Caco-2 (cell line): ENCODE measurements at regions of chr4 and their contacts with region 1.

Region 1: GRCh38 chr4:47032415-47033106 is 1.2 kb downstream of the GABRB1 start:
- DNase-seq: peak; percentile 75 to 84
- H3K4me3 ChIP-seq: peak overlapping the region; percentile 67
- H3K4me3 Mint-ChIP-seq: peak overlapping the region; percentile 97
- H3K27ac Mint-ChIP-seq: peak overlapping the region; percentile 63
- H3K4me1 ChIP-seq: no peaks in the 10 kb centered on the region; the same call in none of the 2 replicates
- H3K4me1 Mint-ChIP-seq: peaks cover 6% of the 10 kb centered on the region
- H3K27me3 ChIP-seq: no peaks in the 10 kb centered on the region
- H3K27me3 Mint-ChIP-seq: no peaks in the 10 kb centered on the region
- CTCF ChIP-seq: peak; percentile 80 to 88

Region 2: GRCh38 chr4:46648088-46648744 is 384.3 kb before region 1 on chr4:
- CTCF ChIA-PET with region 1: interaction called, 7 read pairs
- POLR2A ChIA-PET with region 1: no interaction called
- intact Hi-C with region 1: loop called (anchors 2 kb)
- DNase-seq: peak; percentile 80 to 82
- H3K4me3 ChIP-seq: no peak overlapping the region
- H3K4me3 Mint-ChIP-seq: no peak overlapping the region
- H3K27ac Mint-ChIP-seq: peak overlapping the region; percentile 71
- H3K4me1 ChIP-seq: peaks cover 7% of the 10 kb centered on the region
- H3K4me1 Mint-ChIP-seq: no peaks in the 10 kb centered on the region
- H3K27me3 ChIP-seq: no peaks in the 10 kb centered on the region
- H3K27me3 Mint-ChIP-seq: no peaks in the 10 kb centered on the region
- CTCF ChIP-seq: peak; percentile 73 to 78

Region 3: DNA sequence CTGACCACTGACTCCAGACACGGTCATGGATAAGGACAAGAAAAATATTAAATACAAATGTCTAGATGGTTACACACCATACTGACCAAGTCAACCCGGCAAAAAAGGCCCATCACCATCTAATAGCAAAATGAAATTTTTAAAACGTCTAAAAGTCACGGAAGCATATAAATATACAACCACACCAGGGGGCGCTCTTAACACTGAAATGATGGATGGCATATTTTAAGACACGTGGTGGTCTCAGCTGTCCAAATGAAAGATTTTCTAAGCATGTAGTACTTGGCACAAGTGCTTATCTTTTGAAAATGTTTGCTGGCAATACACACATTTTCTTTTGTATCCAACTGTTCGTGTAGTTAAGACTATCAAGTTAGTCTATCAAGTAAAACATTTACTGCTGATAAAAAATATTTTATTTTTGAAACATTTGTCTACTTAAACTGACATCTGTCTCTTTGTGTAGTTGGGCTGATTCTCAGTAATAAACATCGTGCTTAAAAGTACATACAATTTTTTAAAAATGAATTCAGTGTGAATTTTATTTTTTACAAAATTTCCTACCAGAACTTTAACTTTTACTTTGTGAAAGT is 188.1 kb before region 1 on chr4:
- CTCF ChIA-PET with region 1: no interaction called
- POLR2A ChIA-PET with region 1: no interaction called
- intact Hi-C with region 1: loop called (anchors 1 kb)
- DNase-seq: peak; percentile 66 to 76
- H3K4me3 ChIP-seq: no peak overlapping the region
- H3K4me3 Mint-ChIP-seq: no peak overlapping the region
- H3K27ac Mint-ChIP-seq: no peak overlapping the region
- H3K4me1 ChIP-seq: peaks cover 24% of the 10 kb centered on the region
- H3K4me1 Mint-ChIP-seq: peaks cover 16% of the 10 kb centered on the region
- H3K27me3 ChIP-seq: no peaks in the 10 kb centered on the region
- H3K27me3 Mint-ChIP-seq: no peaks in the 10 kb centered on the region
- CTCF ChIP-seq: peak; percentile 52 to 74

Region 4: GRCh38 chr4:46931981-46932380 is 100.6 kb before region 1 on chr4:
- CTCF ChIA-PET with region 1: no interaction called
- POLR2A ChIA-PET with region 1: no interaction called
- intact Hi-C with region 1: loop called (anchors 1 kb)
- DNase-seq: peak in 1 of 2 experiments; percentile 30
- H3K4me3 ChIP-seq: no peak overlapping the region
- H3K4me3 Mint-ChIP-seq: no peak overlapping the region
- H3K27ac Mint-ChIP-seq: no peak overlapping the region
- H3K4me1 ChIP-seq: peaks cover 41% of the 10 kb centered on the region
- H3K4me1 Mint-ChIP-seq: peaks cover 15% of the 10 kb centered on the region
- H3K27me3 ChIP-seq: no peaks in the 10 kb centered on the region
- H3K27me3 Mint-ChIP-seq: no peaks in the 10 kb centered on the region
- CTCF ChIP-seq: peak; percentile 13 to 35

Region 5: GRCh38 chr4:47122592-47123291 is 90.2 kb after region 1 on chr4:
- CTCF ChIA-PET with region 1: interaction called, 3 read pairs
- POLR2A ChIA-PET with region 1: no interaction called
- intact Hi-C with region 1: loop called (anchors 5 kb)
- DNase-seq: peak; percentile 69 to 80
- H3K4me3 ChIP-seq: no peak overlapping the region
- H3K4me3 Mint-ChIP-seq: no peak overlapping the region
- H3K27ac Mint-ChIP-seq: no peak overlapping the region
- H3K4me1 ChIP-seq: no peaks in the 10 kb centered on the region
- H3K4me1 Mint-ChIP-seq: no peaks in the 10 kb centered on the region
- H3K27me3 ChIP-seq: no peaks in the 10 kb centered on the region
- H3K27me3 Mint-ChIP-seq: no peaks in the 10 kb centered on the region
- CTCF ChIP-seq: peak; percentile 70 to 82

Region 6: DNA sequence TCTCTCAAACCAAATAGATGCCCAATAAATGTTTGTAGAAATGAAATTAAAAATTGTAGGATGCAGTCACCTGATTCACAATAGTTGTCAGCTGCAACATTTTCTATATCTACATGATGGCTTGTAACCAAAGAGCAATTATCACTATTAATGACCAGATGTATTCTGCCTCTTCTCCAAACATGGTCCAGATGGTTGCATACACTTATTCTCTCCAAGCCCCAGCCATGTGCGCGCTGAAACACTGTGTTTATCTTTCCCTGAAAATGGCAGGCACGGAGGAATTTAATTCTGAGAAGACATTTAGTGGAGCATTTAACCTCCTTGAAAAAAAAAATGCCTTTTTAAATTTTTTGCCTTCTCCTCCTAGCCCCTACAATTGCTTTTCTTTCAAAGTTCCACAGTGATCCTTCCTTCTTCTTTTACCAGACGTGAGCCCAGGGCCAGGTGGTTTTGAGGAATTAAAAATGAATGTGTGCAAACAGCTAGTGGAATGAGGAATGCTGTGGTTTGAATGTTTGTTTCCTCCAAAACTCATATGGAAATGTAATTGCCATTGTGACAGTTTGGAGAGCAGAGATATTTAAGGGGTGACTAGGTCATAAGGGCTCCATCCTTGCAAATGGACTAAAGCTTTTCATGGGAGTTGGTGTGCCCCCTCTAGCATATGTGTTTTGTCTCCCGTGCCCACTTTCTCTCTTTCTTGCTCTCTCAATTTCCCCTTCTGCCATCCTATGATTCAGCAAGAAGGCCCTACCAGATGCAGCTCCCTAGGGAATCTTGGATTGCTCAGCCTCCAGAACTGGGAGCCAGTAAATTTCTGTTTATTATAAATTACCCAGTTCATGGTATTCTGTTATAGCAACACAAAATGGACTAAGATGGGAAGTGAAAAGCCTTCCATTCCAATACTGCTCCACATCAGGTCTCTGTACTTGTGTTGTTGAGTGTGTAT is 134.8 kb after region 1 on chr4:
- CTCF ChIA-PET with region 1: no interaction called
- POLR2A ChIA-PET with region 1: no interaction called
- intact Hi-C with region 1: no loop called
- DNase-seq: no peak
- H3K4me3 ChIP-seq: no peak overlapping the region
- H3K4me3 Mint-ChIP-seq: no peak overlapping the region
- H3K27ac Mint-ChIP-seq: no peak overlapping the region
- H3K4me1 ChIP-seq: no peaks in the 10 kb centered on the region
- H3K4me1 Mint-ChIP-seq: peaks cover 6% of the 10 kb centered on the region
- H3K27me3 ChIP-seq: no peaks in the 10 kb centered on the region
- H3K27me3 Mint-ChIP-seq: no peaks in the 10 kb centered on the region
- CTCF ChIP-seq: no peak

Region 7: GRCh38 chr4:47368211-47368610 is 335.6 kb after region 1 on chr4:
- CTCF ChIA-PET with region 1: no interaction called
- POLR2A ChIA-PET with region 1: no interaction called
- intact Hi-C with region 1: no loop called
- DNase-seq: no peak
- H3K4me3 ChIP-seq: no peak overlapping the region
- H3K4me3 Mint-ChIP-seq: no peak overlapping the region
- H3K27ac Mint-ChIP-seq: no peak overlapping the region
- H3K4me1 ChIP-seq: no peaks in the 10 kb centered on the region
- H3K4me1 Mint-ChIP-seq: peaks cover 7% of the 10 kb centered on the region
- H3K27me3 ChIP-seq: no peaks in the 10 kb centered on the region
- H3K27me3 Mint-ChIP-seq: peaks cover 8% of the 10 kb centered on the region
- CTCF ChIP-seq: no peak

Region 8: GRCh38 chr4:48963042-48963679 is 1930.6 kb after region 1 on chr4:
- CTCF ChIA-PET with region 1: no interaction called
- POLR2A ChIA-PET with region 1: no interaction called
- intact Hi-C with region 1: no loop called
- DNase-seq: peak; percentile 77 to 78
- H3K4me3 ChIP-seq: no peak overlapping the region
- H3K4me3 Mint-ChIP-seq: no peak overlapping the region
- H3K27ac Mint-ChIP-seq: no peak overlapping the region
- H3K4me1 ChIP-seq: no peaks in the 10 kb centered on the region
- H3K4me1 Mint-ChIP-seq: peaks cover 19% of the 10 kb centered on the region
- H3K27me3 ChIP-seq: no peaks in the 10 kb centered on the region
- H3K27me3 Mint-ChIP-seq: no peaks in the 10 kb centered on the region
- CTCF ChIP-seq: peak; percentile 89 to 94